ENCODE measurements at regions of chr1 and their contacts with region 1.

Region 1: GRCh38 chr1:114043054-114043453 is 63.8 kb downstream of the OLFML3 start:
- DNase-seq: no peak
- H3K4me3 ChIP-seq: no peak overlapping the region
- H3K27ac ChIP-seq: no peak overlapping the region
- H3K4me1 ChIP-seq: peaks cover 33% of the 10 kb centered on the region
- H3K27me3 ChIP-seq: no peaks in the 10 kb centered on the region
- CTCF ChIP-seq: no peak

Region 2: GRCh38 chr1:112762541-112763517 is 1280.2 kb before region 1 on chr1:
- CTCF ChIA-PET with region 1: interaction called, 15 read pairs
- POLR2A ChIA-PET with region 1: no interaction called
- intact Hi-C with region 1: no loop called
- DNase-seq: peak; percentile 47 to 70
- H3K4me3 ChIP-seq: no peak overlapping the region
- H3K27ac ChIP-seq: no peak overlapping the region
- H3K4me1 ChIP-seq: peaks cover 10% of the 10 kb centered on the region
- H3K27me3 ChIP-seq: no peaks in the 10 kb centered on the region
- CTCF ChIP-seq: no peak

Region 3: DNA sequence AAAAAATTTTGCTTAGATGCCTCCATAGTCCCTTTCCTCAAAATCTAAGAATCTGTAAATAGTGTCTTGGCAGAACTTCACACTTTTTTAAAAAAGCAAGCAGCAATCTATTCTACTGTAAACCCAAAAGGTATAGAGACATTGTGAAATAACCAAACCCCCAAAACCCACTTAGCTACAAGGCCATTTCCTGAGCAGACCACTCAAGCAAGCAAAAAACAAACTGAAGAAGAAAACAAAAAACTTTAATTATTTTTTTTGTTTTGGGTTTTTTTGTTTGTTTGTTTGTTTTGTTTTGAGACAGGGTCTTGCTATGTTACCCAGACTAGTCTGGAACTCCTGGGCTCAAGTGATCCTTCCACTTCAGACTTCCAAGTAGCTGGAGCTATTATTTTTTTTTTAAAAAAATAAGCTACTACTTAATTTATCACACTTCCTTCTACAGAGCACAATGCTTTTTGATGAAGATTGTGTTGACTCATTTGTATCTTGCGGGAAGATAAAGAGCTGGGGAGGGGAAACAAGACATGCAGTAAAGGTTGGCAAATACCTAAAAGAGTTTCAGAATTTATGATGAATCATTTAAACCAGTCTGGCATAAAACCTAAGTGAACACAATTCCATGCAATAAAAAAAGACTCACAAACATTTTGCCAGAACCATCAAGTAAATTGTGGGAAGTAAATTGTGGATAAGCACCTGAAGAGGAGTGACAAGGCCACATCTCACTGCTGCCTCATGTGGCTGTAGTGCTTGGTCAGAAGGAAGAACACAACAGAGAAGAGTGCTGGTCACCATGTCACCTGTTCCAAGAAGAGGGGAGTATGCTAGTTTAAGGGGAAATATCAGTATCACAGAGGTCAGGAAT is 168.8 kb before region 1 on chr1:
- CTCF ChIA-PET with region 1: no interaction called
- POLR2A ChIA-PET with region 1: no interaction called
- intact Hi-C with region 1: no loop called
- DNase-seq: peak in 1 of 2 experiments; percentile 84
- H3K4me3 ChIP-seq: no peak overlapping the region
- H3K27ac ChIP-seq: peak overlapping the region; percentile 34
- H3K4me1 ChIP-seq: peaks cover 26% of the 10 kb centered on the region; the same call in 1 of the 2 replicates
- H3K27me3 ChIP-seq: no peaks in the 10 kb centered on the region
- CTCF ChIP-seq: 0 out of 2 replicates have a peak, but pooled peaks have one; percentile 29